Transverse colon (tissue), 4 donors: ENCODE measurements at regions of chr3 and their contacts with region 1.

Region 1: DNA sequence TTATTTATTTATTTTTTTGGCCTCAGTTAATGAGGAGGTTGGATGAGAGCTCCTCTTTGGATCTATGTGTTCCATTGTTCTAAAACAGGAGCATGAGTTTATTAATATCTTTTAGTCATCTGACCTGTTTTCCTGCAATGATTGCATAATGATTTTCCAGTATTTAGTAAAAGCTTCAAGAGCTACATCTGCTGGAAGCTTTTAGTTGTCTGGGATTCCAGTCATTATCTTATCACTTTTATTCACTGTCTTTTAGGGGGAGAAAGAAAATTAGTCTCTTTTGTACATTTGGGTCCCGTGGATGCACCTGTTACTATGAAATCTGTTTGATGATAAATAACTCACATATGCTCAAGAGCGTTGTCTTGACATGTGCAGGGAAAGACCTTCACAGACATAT is 1270.0 kb downstream of the ROBO1 start:
- DNase-seq: no peak
- H3K4me3 ChIP-seq: no peak overlapping the region
- H3K27ac ChIP-seq: no peak overlapping the region
- H3K4me1 ChIP-seq: no peaks in the 10 kb centered on the region
- H3K27me3 ChIP-seq: no peaks in the 10 kb centered on the region
- CTCF ChIP-seq: no peak
- EP300 ChIP-seq: no peak
- POLR2A ChIP-seq: no peak

Region 2: GRCh38 chr3:77179762-77180161 is 1318.0 kb before region 1 on chr3:
- in situ Hi-C with region 1: no loop called
- intact Hi-C with region 1: loop called (anchors 5 kb)
- DNase-seq: no peak
- H3K4me3 ChIP-seq: no peak overlapping the region
- H3K27ac ChIP-seq: no peak overlapping the region
- H3K4me1 ChIP-seq: no peaks in the 10 kb centered on the region
- H3K27me3 ChIP-seq: no peaks in the 10 kb centered on the region
- CTCF ChIP-seq: no peak
- EP300 ChIP-seq: no peak
- POLR2A ChIP-seq: no peak

Region 3: DNA sequence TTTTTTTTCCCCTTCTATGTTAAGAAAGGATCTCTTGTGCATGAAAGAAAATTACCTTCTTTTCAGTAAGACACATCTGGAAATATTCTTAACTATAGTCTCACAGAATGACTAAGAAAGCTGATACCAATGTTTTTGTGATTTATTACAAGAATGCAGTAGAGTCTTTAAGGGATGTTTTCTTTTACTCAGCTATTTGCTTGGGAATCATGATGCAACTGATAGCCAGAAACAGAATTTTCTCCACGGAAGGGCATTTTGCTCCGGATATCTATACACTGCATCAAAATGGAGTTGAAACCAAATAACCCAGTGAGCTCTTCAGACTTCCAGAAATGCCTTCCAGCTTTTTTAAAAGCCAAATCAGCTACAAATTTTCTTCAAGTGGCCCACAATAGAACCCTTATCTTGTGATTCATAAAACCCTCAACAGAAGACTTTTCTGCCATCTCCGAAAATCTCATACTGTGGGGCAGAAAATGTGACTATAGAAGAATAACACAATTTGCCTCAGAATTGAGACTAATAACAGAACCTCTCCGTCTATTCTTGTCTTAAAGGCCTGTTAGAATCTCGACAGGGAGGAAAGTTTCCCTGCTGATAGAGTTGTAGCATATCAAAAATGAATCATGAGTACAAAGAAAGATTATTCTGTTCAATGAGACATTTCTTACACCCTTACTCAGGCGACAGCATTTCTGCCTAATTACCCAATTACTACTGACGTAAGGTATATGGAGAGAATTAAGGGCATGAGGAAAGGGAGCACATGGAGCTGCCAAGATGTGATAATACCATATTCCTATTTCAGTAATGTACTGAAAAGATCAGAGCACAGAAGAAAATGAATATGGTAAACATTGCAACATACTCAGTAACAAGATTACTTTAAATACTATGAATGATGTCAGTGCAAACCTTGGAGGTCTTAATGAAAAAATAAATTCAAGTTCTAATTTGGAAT is 369.9 kb after region 1 on chr3:
- in situ Hi-C with region 1: no loop called
- intact Hi-C with region 1: no loop called
- DNase-seq: no peak
- H3K4me3 ChIP-seq: no peak overlapping the region
- H3K27ac ChIP-seq: no peak overlapping the region
- H3K4me1 ChIP-seq: peaks cover 0 to 6% (median 0%) of the 10 kb centered on the region in 4 donors
- H3K27me3 ChIP-seq: no peaks in the 10 kb centered on the region
- CTCF ChIP-seq: no peak
- EP300 ChIP-seq: no peak
- POLR2A ChIP-seq: no peak